Activated T-helper 1 cell treated with anti-CD3 and anti-CD28 coated beads, Interleukin-12 subunit alpha, Interleukin-12 subunit beta, Interleukin-2, Interleukin-4 antibody, amounts not matched to agents 30 ng/mL and 10 ng/mL and 1 ng/mL, durations not matched to agents 14 hours and 24 hours and 36 hours (primary cell): ENCODE measurements at regions of chrX and their contacts with region 1.

Region 1: DNA sequence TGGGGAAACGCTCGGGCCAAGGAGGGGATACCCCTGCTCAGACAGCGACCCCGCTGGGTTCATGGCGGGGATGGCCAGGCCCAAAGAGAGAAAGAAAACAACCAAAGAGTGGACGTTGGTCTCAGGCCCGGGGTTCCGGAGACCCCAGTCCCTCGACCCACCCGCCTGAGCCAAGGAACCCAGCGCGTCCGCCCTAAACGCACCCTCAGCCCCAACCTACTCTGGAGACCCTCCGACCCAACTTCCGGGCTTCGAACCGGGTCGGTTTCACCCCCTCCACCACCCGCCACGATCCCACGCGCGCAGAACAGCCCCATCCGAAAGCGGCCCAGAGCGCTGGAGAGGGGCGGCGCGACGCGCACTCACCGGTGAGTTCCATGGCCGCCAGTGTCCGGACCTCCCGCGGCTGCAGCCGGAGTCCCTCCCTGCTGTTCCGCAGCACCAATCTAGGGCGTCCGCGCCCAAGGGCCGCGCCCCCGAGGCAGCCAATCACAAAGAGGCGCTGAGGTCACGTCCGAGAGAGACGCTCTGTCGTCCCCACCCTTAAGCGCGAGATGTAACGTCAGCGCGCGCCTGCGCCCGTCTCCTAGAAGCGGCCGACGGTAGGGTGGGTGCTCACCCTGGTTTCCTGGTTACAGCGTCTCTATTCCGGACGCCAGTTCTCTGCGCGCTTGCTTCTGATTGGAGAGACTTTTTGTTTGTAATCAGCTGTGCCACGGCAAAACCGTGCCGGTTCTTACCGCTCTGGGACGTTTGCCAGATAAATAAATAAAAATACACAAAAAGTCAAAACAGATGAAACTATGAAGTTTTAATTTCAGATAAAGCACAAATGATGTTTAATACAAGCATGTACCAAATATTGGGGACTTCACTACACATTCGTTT is at the start of gene PIGA:
- DNase-seq: peak; percentile 89
- H3K4me3 Mint-ChIP-seq: peak within 1 kb of the TSS; percentile 91
- H3K27ac Mint-ChIP-seq: peak within 1 kb of the TSS; percentile 88
- H3K4me1 Mint-ChIP-seq: peaks cover 14% of the 10 kb centered on the region
- H3K27me3 Mint-ChIP-seq: no peaks in the 10 kb centered on the region
- total RNA-seq, gene PIGA: 23.9 and 25.4 TPM in 2 replicates

Region 2: DNA sequence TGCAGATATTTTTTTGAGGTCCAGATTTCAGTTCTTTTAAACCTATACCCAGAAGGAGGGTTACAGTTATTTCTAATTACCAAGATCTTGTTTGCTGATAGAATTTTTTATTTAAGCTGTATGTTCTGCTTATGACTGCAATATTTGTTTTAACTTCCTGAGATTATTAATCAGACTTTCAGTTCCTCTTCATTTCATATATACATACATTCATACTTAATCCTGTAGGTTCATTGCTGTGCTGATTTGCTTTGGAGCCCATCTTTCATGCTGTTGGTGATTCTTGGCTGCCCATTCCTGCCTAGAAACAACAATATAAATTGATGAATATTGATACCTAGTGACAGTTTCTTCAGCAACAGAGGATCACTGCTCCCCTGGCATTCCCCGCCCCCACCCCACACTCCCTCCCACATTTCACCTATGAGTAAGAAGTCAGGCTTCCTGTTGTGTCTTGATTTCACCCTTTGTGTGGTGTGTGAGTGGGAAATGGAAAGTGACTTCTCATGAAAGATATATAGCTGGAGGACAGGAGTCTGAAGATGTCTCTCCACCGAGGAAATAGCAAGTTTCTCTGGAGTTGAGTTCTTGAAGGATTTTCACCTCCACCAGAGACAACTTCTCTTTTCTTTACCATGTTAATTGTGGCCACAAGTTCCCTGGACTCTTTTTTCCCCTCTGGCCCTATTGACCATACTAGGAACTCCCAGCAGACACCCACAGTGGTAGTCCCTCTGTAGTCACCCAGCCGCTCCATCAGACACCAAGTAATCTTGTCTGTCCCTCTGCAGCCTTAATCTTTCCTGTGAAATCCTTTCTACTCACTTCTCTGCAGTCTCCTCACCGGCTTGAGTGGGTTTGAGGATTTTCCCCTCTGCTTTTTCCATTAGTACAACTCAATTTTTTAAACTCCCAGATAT is 183.9 kb before region 1 on chrX:
- intact Hi-C with region 1: loop called (anchors 10 kb)
- DNase-seq: peak; percentile 8
- H3K4me3 Mint-ChIP-seq: peak overlapping the region; percentile 57
- H3K27ac Mint-ChIP-seq: peak overlapping the region; percentile 79
- H3K4me1 Mint-ChIP-seq: peaks cover 23% of the 10 kb centered on the region
- H3K27me3 Mint-ChIP-seq: peaks cover 2% of the 10 kb centered on the region